ENCODE measurements at regions of chr13 and their contacts with region 1.

Region 1: GRCh38 chr13:49279885-49280284 is 32.2 kb downstream of the CDADC1 start:
- DNase-seq: no peak
- ATAC-seq: no peak
- H3K4me3 ChIP-seq: no peak overlapping the region
- H3K27ac ChIP-seq: no peak overlapping the region
- H3K4me1 ChIP-seq: no peaks in the 10 kb centered on the region
- H3K27me3 ChIP-seq: no peaks in the 10 kb centered on the region
- CTCF ChIP-seq: no peak

Region 2: DNA sequence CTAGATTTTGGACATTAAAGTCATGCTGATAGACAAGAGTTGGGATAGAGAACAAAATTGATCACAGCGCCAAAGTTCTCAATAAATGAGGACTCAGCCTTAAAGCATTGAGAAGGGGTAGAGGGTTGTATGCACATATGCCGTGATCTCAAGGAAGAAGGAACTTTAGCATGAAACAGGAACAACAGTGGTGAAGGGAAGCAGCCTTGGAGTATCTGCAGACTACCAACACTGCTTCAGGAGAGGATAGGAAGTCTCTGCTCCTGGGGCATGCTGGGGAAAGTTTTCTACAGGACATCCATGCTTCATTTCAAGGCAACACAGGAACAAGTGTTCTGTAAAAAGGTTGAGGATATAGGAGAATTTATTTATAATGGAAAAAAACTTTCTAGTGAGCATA is 171.7 kb before region 1 on chr13:
- intact Hi-C with region 1: loop called in 1 of 2 experiments (anchors 10 kb)
- DNase-seq: no peak
- ATAC-seq: peak; percentile 22
- H3K4me3 ChIP-seq: no peak overlapping the region
- H3K27ac ChIP-seq: peak overlapping the region in 1 of 2 donors; percentile 34
- H3K4me1 ChIP-seq: peaks cover 19 to 44% of the 10 kb centered on the region in 2 donors
- H3K27me3 ChIP-seq: no peaks in the 10 kb centered on the region
- CTCF ChIP-seq: no peak

Region 3: GRCh38 chr13:49472186-49472585 is 192.3 kb after region 1 on chr13:
- intact Hi-C with region 1: no loop called
- DNase-seq: no peak
- ATAC-seq: no peak
- H3K4me3 ChIP-seq: no peak overlapping the region
- H3K27ac ChIP-seq: no peak overlapping the region
- H3K4me1 ChIP-seq: no peaks in the 10 kb centered on the region
- H3K27me3 ChIP-seq: no peaks in the 10 kb centered on the region
- CTCF ChIP-seq: no peak